ENCODE measurements at regions of chrX and their contacts with region 1.

Region 1: DNA sequence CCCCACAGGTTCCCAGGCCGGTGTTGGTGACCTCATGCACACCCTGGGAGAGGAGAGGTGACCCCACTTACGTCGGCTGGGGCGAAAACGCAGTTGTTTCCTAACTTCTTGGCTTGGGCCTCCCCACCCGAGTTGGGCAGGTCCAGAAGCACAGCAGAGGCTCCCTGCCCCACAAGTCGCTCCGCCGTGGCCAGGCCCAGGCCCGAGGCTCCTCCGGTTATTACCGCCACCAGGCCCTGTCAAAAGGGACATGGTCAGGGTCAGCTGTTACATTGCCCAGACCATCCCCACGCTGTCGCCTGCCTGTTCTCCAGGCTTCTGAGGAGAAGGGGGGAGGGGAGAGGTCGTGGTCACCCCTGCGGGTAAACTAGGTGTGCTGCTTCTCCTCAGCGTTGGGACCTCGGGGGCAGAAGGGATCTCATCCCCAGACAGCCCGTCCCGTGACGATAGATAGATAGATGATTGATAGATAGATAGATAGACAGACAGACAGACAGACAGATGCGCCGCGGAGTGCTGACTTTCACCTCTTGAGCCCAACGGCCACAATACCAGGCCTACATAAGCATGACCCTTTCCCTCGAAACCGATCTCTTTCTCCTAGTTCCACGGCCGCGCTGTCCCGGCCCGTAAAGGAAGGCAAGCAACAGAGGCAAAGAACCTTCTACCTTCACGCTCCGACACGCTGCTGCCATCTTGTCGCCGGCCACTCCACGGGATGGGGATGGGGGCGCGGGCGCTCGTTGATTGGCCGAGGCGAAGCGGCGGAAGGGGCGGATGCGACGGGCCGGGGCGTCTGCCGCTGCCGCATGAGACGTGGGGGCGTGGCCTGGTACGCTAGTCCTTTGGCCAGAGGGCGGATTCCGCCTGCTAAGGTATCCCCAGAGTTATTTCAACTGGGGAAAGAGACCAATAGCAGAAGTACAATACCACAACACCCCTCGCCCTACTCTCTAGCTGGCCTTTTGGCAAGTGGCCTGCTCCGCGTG is at the start of gene HSD17B10:
- DNase-seq: peak; percentile 89
- H3K4me3 Mint-ChIP-seq: peak within 1 kb of the TSS; percentile 86
- H3K27ac Mint-ChIP-seq: peak within 1 kb of the TSS; percentile 83
- H3K4me1 Mint-ChIP-seq: peaks cover 30% of the 10 kb centered on the region
- H3K27me3 Mint-ChIP-seq: no peaks in the 10 kb centered on the region
- total RNA-seq, gene HSD17B10: 99.6 to 105 TPM

Region 2: DNA sequence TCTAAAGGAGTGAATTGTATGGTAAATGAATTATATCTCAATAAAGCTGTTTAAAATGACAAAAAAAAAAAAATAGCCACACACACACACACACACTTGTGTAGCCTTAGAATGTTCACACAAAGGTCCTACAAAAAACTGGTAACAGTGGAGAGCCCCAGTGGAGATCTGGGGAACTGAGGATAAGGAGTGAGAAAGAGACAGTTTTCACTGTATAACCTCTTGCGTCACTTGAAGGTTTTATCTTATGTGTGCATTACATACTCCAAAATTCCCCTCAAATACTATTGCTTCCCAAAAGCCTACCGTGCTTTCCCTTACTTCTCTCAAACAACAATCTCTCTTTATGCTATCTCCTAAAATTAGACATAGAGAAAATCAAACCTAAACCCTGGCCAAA is 79.3 kb before region 1 on chrX:
- CTCF ChIA-PET with region 1: no interaction called
- POLR2A ChIA-PET with region 1: no interaction called
- DNase-seq: no peak
- H3K4me3 Mint-ChIP-seq: no peak overlapping the region
- H3K27ac Mint-ChIP-seq: no peak overlapping the region
- H3K4me1 Mint-ChIP-seq: no peaks in the 10 kb centered on the region
- H3K27me3 Mint-ChIP-seq: no peaks in the 10 kb centered on the region

Region 3: GRCh38 chrX:53422086-53422860 is 11.7 kb before region 1 on chrX and contains the start of gene SMC1A:
- CTCF ChIA-PET with region 1: interaction called, 17 read pairs
- POLR2A ChIA-PET with region 1: interaction called, 4 read pairs
- DNase-seq: peak; percentile 95
- H3K4me3 Mint-ChIP-seq: peak within 1 kb of the TSS; percentile 87
- H3K27ac Mint-ChIP-seq: peak within 1 kb of the TSS; percentile 97
- H3K4me1 Mint-ChIP-seq: peaks cover 30% of the 10 kb centered on the region
- H3K27me3 Mint-ChIP-seq: no peaks in the 10 kb centered on the region
- total RNA-seq, gene SMC1A: 157 to 159 TPM

Measured in activated CD4-positive, alpha-beta T cell treated with anti-CD3 and anti-CD28 coated beads, Interleukin-2, amount 10 ng/mL, durations not matched to agents 7 days and 5 days (primary cell).